ENCODE measurements at regions of chr16 and their contacts with region 1.

Region 1: GRCh38 chr16:17578921-17579874 is 108.4 kb upstream of the XYLT1 start:
- DNase-seq: peak; percentile 86
- ATAC-seq: peak; percentile 99
- H3K4me3 ChIP-seq: no peak overlapping the region
- H3K27ac ChIP-seq: no peak overlapping the region
- H3K4me1 ChIP-seq: no peaks in the 10 kb centered on the region
- H3K27me3 ChIP-seq: peaks cover 5% of the 10 kb centered on the region
- CTCF ChIP-seq: peak; percentile 83
- POLR2A ChIP-seq: no peak
- RAD21 ChIP-seq: peak; percentile 80

Region 2: DNA sequence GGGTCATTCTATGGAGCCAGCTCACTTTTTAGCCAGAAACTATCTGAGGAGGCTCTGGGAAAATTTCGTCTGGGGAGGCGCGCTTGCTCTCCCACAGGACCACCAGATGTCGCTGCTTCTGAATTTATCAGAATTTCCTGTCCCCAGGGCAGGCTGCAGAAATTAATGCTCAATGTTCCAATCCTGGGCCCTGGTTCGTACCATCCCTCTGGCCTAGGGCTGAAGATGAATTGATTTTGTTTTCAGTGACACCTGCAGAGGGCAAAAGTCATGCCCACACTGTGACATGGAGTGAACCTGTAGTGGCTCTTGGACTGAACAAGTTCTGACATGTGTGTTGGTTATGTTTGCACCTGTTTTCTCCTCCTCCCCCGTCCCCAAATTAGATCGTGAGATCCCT is 717.7 kb before region 1 on chr16:
- CTCF ChIA-PET with region 1: no interaction called
- POLR2A ChIA-PET with region 1: no interaction called
- dilution Hi-C with region 1: no loop called
- in situ Hi-C with region 1: no loop called
- intact Hi-C with region 1: loop called (anchors 2 kb)
- DNase-seq: peak; percentile 32
- ATAC-seq: peak; percentile 67
- H3K4me3 ChIP-seq: no peak overlapping the region
- H3K27ac ChIP-seq: no peak overlapping the region
- H3K4me1 ChIP-seq: no peaks in the 10 kb centered on the region
- H3K27me3 ChIP-seq: no peaks in the 10 kb centered on the region
- CTCF ChIP-seq: peak; percentile 67
- POLR2A ChIP-seq: no peak
- RAD21 ChIP-seq: peak; percentile 59

Region 3: DNA sequence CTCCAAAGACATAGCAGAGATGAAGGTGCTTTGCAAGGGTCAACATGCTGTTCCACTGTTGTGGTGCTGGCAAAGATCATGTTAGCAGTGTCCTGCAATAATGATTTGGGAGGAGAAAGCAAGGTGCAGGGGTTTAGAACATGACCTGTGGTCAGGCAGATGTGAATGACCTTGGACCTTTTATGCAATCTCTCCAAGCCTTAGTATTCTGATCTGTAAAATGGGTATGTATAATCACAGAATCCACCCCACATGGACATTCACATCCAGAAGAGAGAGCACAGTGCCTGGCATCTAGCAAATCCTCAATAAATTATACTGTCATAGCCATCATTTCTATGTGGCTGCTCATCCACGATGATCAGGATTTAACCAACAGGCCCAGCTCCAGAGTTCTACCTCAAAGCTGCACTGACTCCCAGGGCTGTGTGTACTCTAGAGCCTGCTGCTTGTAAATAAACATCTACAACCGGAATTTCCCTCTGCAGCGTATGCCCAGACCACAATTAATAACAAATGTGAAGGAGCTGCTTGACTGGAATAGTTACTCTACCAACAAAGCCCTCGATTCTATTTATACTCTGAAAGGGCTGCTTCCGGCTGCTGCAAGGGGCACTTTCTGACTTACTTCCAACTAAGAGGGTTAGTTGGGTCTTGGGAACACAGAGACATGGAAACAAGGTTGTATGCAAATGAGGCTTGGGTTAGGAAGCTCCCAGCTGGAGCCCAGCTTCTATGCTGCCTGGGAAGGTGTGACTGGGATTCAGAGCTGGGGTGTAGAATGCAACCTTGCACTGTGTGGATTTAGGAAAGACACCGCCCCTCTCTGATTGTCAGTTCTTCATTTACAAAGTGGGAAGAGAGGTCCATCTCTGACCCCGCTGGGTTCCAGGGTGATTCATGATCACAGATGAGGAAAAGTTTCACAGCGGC is 373.7 kb before region 1 on chr16:
- CTCF ChIA-PET with region 1: no interaction called
- POLR2A ChIA-PET with region 1: no interaction called
- dilution Hi-C with region 1: no loop called
- in situ Hi-C with region 1: no loop called
- intact Hi-C with region 1: loop called (anchors 10 kb)
- DNase-seq: peak; percentile 87
- ATAC-seq: peak; percentile 95
- H3K4me3 ChIP-seq: no peak overlapping the region
- H3K27ac ChIP-seq: no peak overlapping the region
- H3K4me1 ChIP-seq: peaks cover 4% of the 10 kb centered on the region
- H3K27me3 ChIP-seq: no peaks in the 10 kb centered on the region
- CTCF ChIP-seq: no peak
- POLR2A ChIP-seq: no peak
- RAD21 ChIP-seq: no peak

Region 4: DNA sequence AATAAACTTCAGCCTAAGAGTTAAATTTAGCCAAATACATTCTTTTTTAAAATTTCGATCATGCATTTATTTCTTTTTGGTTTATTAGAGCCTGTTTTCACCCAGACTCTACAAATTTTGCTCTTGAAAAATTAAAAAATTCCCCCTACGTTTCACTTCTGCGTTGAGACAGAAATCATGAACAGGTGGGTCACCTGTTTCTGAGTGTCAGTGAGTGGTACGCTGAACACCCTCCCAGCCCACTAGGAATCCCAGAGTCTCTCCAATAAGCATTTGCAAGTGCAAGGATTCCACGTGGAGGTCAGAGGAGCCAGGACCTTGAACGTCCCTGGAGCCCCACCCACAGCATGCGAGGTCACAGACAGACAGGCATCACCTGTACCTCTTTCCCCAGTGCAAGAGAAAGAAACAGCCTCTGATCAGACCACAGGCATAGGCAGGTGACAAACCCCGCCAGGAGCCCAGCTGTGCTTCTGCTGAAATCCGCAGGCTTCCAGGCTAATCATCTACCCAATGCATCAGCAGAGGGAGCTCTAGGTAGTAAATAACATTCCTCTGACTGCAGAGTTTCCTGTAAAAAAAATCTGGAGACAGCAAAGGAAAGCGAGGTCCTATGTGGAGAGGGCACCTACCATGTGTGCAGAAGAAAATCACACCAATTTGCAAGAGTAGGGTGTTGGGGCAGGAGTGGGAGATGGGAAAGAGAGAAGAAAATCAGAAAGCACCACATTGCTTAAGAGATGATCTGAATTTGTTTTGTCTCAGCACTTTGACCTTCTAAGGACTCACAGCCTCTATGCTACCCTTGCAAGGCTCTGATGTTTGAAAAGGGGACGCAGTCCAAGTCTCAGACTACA is 102.6 kb before region 1 on chr16:
- CTCF ChIA-PET with region 1: interaction called, 23 read pairs
- POLR2A ChIA-PET with region 1: no interaction called
- dilution Hi-C with region 1: no loop called
- in situ Hi-C with region 1: loop called (anchors 5 kb)
- intact Hi-C with region 1: loop called (anchors 1 kb)
- DNase-seq: peak; percentile 74
- ATAC-seq: peak; percentile 93
- H3K4me3 ChIP-seq: no peak overlapping the region
- H3K27ac ChIP-seq: no peak overlapping the region
- H3K4me1 ChIP-seq: no peaks in the 10 kb centered on the region
- H3K27me3 ChIP-seq: no peaks in the 10 kb centered on the region
- CTCF ChIP-seq: peak; percentile 73
- POLR2A ChIP-seq: no peak
- RAD21 ChIP-seq: peak; percentile 76

Region 5: GRCh38 chr16:17556276-17557052 is 22.7 kb before region 1 on chr16:
- CTCF ChIA-PET with region 1: interaction called, 11 read pairs
- POLR2A ChIA-PET with region 1: no interaction called
- dilution Hi-C with region 1: no loop called
- in situ Hi-C with region 1: no loop called
- intact Hi-C with region 1: no loop called
- DNase-seq: peak; percentile 33
- ATAC-seq: peak; percentile 85
- H3K4me3 ChIP-seq: no peak overlapping the region
- H3K27ac ChIP-seq: no peak overlapping the region
- H3K4me1 ChIP-seq: peaks cover 3% of the 10 kb centered on the region
- H3K27me3 ChIP-seq: peaks cover 3% of the 10 kb centered on the region; the same call in 1 of the 2 replicates
- CTCF ChIP-seq: peak; percentile 58
- POLR2A ChIP-seq: no peak
- RAD21 ChIP-seq: peak; percentile 50

Region 6: DNA sequence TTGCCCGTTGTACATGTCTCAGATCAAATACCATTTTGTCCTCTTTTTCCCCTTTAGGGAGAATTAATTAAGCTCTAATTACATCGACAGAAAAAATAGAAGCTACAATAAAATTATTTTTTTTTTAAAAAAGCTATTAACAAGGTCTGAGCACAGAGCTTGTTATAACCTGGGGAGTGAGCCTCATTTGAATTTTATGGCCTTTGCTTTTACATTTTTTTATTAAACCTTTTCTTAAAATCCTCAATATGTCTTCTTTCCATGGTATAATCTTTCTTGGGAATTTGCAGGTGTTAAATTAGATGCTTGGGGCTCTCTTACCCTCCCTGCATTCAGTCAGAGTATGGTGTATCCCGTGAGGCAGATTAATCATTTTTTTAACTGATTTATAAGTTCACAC is 104.1 kb after region 1 on chr16:
- CTCF ChIA-PET with region 1: no interaction called
- POLR2A ChIA-PET with region 1: no interaction called
- dilution Hi-C with region 1: no loop called
- in situ Hi-C with region 1: no loop called
- intact Hi-C with region 1: no loop called
- DNase-seq: no peak
- ATAC-seq: no peak
- H3K4me3 ChIP-seq: no peak overlapping the region
- H3K27ac ChIP-seq: no peak overlapping the region
- H3K4me1 ChIP-seq: no peaks in the 10 kb centered on the region
- H3K27me3 ChIP-seq: no peaks in the 10 kb centered on the region
- CTCF ChIP-seq: no peak
- POLR2A ChIP-seq: no peak
- RAD21 ChIP-seq: no peak

Region 7: DNA sequence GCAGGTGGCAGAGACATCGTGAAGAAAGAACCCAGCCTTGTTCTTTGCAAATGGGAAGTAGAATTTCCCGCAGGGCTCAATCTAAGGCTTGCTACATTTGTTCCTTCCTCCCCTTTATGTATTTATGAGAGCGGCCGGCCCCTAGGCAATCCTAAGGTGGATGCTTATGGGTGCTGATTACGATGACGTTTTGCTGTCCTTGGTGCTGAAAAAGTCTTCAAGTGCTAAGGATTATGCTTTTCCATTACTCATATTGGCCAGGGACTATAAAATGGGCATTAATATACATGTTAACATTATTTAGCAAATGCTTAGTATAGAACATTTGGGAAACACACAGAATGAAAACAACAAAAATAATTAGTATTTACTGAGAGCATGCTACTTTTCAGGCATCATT is 204.9 kb after region 1 on chr16:
- CTCF ChIA-PET with region 1: no interaction called
- POLR2A ChIA-PET with region 1: no interaction called
- dilution Hi-C with region 1: no loop called
- in situ Hi-C with region 1: no loop called
- intact Hi-C with region 1: no loop called
- DNase-seq: peak; percentile 56
- ATAC-seq: no peak
- H3K4me3 ChIP-seq: no peak overlapping the region
- H3K27ac ChIP-seq: no peak overlapping the region
- H3K4me1 ChIP-seq: no peaks in the 10 kb centered on the region
- H3K27me3 ChIP-seq: no peaks in the 10 kb centered on the region; the same call in 1 of the 2 replicates
- CTCF ChIP-seq: no peak
- POLR2A ChIP-seq: no peak
- RAD21 ChIP-seq: no peak